ENCODE measurements at regions of chr1 and their contacts with region 1.

Region 1: GRCh38 chr1:52702886-52703787 is 5.0 kb upstream of the COA7 start:
- DNase-seq: peak; percentile 87
- H3K4me3 Mint-ChIP-seq: peak overlapping the region; percentile 72
- H3K27ac Mint-ChIP-seq: peak overlapping the region; percentile 81
- H3K4me1 Mint-ChIP-seq: peaks cover 28% of the 10 kb centered on the region
- H3K27me3 Mint-ChIP-seq: peaks cover 3% of the 10 kb centered on the region

Region 2: GRCh38 chr1:52726265-52727113 is 23.4 kb after region 1 on chr1 and contains the start of gene ZYG11B:
- CTCF ChIA-PET with region 1: interaction called, 5 read pairs
- POLR2A ChIA-PET with region 1: interaction called, 24 read pairs
- DNase-seq: peak; percentile 92
- H3K4me3 Mint-ChIP-seq: peak within 1 kb of the TSS; percentile 93
- H3K27ac Mint-ChIP-seq: peak within 1 kb of the TSS; percentile 53
- H3K4me1 Mint-ChIP-seq: peaks cover 34% of the 10 kb centered on the region
- H3K27me3 Mint-ChIP-seq: peaks cover 7% of the 10 kb centered on the region
- total RNA-seq, gene ZYG11B: 12.7 to 12.8 TPM

Region 3: DNA sequence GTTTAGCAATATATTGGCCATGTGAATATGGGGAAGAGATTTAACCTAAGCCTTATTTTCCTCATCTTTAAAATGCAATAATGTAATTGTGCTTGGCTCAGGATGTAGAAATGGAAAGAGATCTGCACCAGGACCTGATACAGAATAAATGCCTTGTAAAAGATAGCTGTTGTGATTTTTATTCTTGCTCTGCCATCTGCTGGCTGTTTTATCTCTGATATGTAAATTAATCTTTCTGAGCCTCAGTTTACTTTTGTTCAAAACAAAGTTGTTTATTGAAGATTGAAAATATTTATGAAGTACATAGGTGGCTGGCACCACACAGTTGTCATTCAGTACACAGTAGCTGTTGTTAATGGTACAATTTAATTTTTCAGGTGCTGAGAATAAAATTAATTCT is 45.0 kb after region 1 on chr1:
- CTCF ChIA-PET with region 1: interaction called, 12 read pairs
- POLR2A ChIA-PET with region 1: no interaction called
- DNase-seq: no peak
- H3K4me3 Mint-ChIP-seq: no peak overlapping the region
- H3K27ac Mint-ChIP-seq: no peak overlapping the region
- H3K4me1 Mint-ChIP-seq: no peaks in the 10 kb centered on the region
- H3K27me3 Mint-ChIP-seq: no peaks in the 10 kb centered on the region